ENCODE measurements at regions of chr13 and their contacts with region 1.

Region 1: GRCh38 chr13:27374650-27375049 is 49.8 kb upstream of the GTF3A start:
- DNase-seq: peak; percentile 89
- ATAC-seq: peak; percentile 84
- H3K4me3 ChIP-seq: peak overlapping the region; percentile 56
- H3K27ac ChIP-seq: peak overlapping the region; percentile 91
- H3K4me1 ChIP-seq: peaks cover 19% of the 10 kb centered on the region
- H3K27me3 ChIP-seq: no peaks in the 10 kb centered on the region
- CTCF ChIP-seq: peak; percentile 85

Region 2: GRCh38 chr13:27339299-27339698 is 35.4 kb before region 1 on chr13:
- CTCF ChIA-PET with region 1: interaction called, 11 read pairs
- POLR2A ChIA-PET with region 1: no interaction called
- intact Hi-C with region 1: no loop called
- DNase-seq: peak; percentile 71
- ATAC-seq: peak; percentile 85
- H3K4me3 ChIP-seq: no peak overlapping the region
- H3K27ac ChIP-seq: no peak overlapping the region
- H3K4me1 ChIP-seq: no peaks in the 10 kb centered on the region
- H3K27me3 ChIP-seq: no peaks in the 10 kb centered on the region
- CTCF ChIP-seq: peak; percentile 59

Region 3: GRCh38 chr13:27424246-27425157 is 49.9 kb after region 1 on chr13 and contains the start of gene GTF3A:
- CTCF ChIA-PET with region 1: no interaction called
- POLR2A ChIA-PET with region 1: no interaction called
- intact Hi-C with region 1: loop called (anchors 1 kb)
- DNase-seq: peak; percentile 88
- ATAC-seq: peak; percentile 55
- H3K4me3 ChIP-seq: peak within 1 kb of the TSS; percentile 69
- H3K27ac ChIP-seq: peak within 1 kb of the TSS; percentile 78
- H3K4me1 ChIP-seq: peaks cover 37% of the 10 kb centered on the region
- H3K27me3 ChIP-seq: no peaks in the 10 kb centered on the region
- CTCF ChIP-seq: no peak
- total RNA-seq, gene GTF3A: 174 and 201 TPM in 2 replicates

Region 4: GRCh38 chr13:27533155-27533643 is 158.5 kb after region 1 on chr13:
- CTCF ChIA-PET with region 1: interaction called, 4 read pairs
- POLR2A ChIA-PET with region 1: no interaction called
- intact Hi-C with region 1: loop called (anchors 2 kb)
- DNase-seq: peak; percentile 80
- ATAC-seq: peak; percentile 99
- H3K4me3 ChIP-seq: peak overlapping the region; percentile 53; the same call in 1 of the 2 replicates
- H3K27ac ChIP-seq: no peak overlapping the region
- H3K4me1 ChIP-seq: no peaks in the 10 kb centered on the region
- H3K27me3 ChIP-seq: no peaks in the 10 kb centered on the region
- CTCF ChIP-seq: peak; percentile 92

Region 5: DNA sequence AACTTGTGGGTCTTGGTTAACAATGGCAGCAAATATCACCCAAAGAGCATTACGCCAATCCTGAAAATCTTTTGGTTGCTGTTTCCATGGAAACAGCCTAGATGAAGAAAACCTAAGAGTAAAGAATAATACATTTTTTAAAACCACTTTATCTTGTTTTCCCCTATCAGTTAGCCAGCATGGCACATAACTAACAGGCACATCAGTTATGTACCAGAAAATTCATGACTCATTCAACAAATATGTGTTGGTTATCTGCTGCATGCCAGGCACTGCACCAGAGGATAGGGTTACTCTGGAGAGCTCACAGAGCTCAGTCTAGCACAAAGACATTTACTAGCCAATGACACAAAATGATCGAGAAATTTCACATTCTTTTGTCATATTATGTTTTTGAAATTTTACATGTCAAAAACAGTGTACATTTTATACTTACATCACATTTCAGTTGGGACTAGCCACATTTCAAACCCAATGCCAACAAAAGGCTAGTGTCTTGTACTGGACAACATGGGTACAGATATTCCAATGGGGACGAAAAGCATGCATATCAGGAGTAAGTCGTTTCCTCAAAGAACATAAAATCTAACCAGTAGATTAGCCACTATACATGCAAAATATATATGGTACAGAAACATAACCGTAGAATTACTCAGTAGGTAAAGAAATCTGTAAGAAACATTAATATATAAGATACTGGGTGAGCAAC is 225.3 kb after region 1 on chr13:
- CTCF ChIA-PET with region 1: no interaction called
- POLR2A ChIA-PET with region 1: no interaction called
- intact Hi-C with region 1: no loop called
- DNase-seq: peak; percentile 90
- ATAC-seq: peak; percentile 100
- H3K4me3 ChIP-seq: 0 out of 2 replicates have a peak overlapping the region, but pooled peaks have one; percentile 27
- H3K27ac ChIP-seq: no peak overlapping the region
- H3K4me1 ChIP-seq: peaks cover 21% of the 10 kb centered on the region
- H3K27me3 ChIP-seq: no peaks in the 10 kb centered on the region
- CTCF ChIP-seq: no peak

Region 6: DNA sequence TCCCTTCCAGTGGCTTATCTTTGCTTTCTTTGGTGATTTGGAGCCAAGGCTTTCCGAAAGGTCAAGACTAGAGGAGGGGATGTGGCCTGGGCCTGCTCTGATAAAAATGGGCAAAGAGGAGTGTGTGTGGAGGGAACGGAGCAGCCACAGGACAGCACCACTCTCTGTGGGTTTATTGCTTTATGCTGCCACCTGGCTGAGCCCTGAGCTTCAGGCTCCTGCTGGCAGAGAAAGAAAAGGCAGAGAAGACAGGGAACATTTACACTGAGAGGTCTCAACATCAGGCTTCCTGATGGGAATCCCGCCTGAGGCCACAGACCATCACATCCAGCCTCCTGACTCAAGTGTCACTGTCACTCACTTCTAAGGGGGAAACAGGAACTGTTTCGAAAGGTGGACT is 408.5 kb after region 1 on chr13:
- CTCF ChIA-PET with region 1: no interaction called
- POLR2A ChIA-PET with region 1: no interaction called
- intact Hi-C with region 1: loop called (anchors 5 kb)
- DNase-seq: peak; percentile 21
- ATAC-seq: peak; percentile 73
- H3K4me3 ChIP-seq: no peak overlapping the region
- H3K27ac ChIP-seq: no peak overlapping the region
- H3K4me1 ChIP-seq: no peaks in the 10 kb centered on the region
- H3K27me3 ChIP-seq: peaks cover 20% of the 10 kb centered on the region
- CTCF ChIP-seq: peak; percentile 47